Heart left ventricle (tissue), 16 donors: ENCODE measurements at regions of chr1 and their contacts with region 1.

Region 1: GRCh38 chr1:218345673-218346390 is 696 bp downstream of the TGFB2 start:
- DNase-seq: peak; percentile 61 to 84 (median 70)
- ATAC-seq: peak; percentile 59 to 86 (median 78)
- H3K4me3 ChIP-seq: peak overlapping the region; percentile 56 to 87 (median 68)
- H3K27ac ChIP-seq: peak overlapping the region; percentile 42 to 91 (median 82)
- H3K4me1 ChIP-seq: peaks cover 0 to 43% (median 11%) of the 10 kb centered on the region in 12 donors
- H3K27me3 ChIP-seq: peaks cover 0 to 5% (median 0%) of the 10 kb centered on the region in 9 donors
- CTCF ChIP-seq: peak in 6 of 12 donors; percentile 1 to 23 (median 8)
- POLR2A ChIP-seq: no peak

Region 2: DNA sequence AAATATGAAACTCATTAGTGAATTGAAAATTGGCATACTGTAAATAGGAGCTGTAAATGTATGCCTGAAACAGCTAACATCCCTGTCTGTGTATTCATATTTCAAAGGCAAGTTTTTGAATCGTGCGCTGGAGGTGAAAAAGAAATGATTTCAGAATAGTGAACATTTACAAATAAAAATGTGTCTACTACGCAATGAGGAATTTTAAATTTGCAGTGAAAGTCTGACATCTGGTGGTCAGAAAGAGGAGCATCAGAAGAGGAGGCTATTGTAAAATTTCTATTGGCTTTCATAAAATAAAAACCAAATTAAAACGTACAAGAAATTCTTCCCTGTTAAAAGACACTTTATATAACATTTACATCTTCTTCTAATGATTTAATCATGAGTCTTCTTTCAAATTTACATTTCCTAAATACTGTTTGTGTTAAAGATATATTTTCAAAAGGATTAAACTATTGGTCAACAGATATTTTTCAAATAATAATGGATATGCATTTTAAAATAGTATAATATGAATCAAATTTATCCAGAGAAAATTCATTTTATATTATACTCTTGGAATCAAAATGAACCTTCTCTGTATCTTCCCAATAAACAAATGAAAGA is 174.4 kb before region 1 on chr1:
- intact Hi-C with region 1: no loop called
- DNase-seq: no peak
- ATAC-seq: no peak
- H3K4me3 ChIP-seq: peak overlapping the region in 5 of 12 donors; percentile 7 to 32 (median 18)
- H3K27ac ChIP-seq: no peak overlapping the region
- H3K4me1 ChIP-seq: peaks cover 0 to 6% (median 0%) of the 10 kb centered on the region in 12 donors
- H3K27me3 ChIP-seq: peaks cover 0 to 65% (median 23%) of the 10 kb centered on the region in 9 donors
- CTCF ChIP-seq: peak; percentile 55 to 86 (median 74)
- POLR2A ChIP-seq: no peak

Region 3: GRCh38 chr1:218476380-218476779 is 130.5 kb after region 1 on chr1:
- intact Hi-C with region 1: loop called in 1 of 10 experiments (anchors 5 kb)
- DNase-seq: no peak
- ATAC-seq: no peak
- H3K4me3 ChIP-seq: no peak overlapping the region
- H3K27ac ChIP-seq: peak overlapping the region in 6 of 12 donors; percentile 9 to 66 (median 52)
- H3K4me1 ChIP-seq: peaks cover 0 to 64% (median 28%) of the 10 kb centered on the region in 12 donors
- H3K27me3 ChIP-seq: no peaks in the 10 kb centered on the region
- CTCF ChIP-seq: no peak
- POLR2A ChIP-seq: no peak

Region 4: DNA sequence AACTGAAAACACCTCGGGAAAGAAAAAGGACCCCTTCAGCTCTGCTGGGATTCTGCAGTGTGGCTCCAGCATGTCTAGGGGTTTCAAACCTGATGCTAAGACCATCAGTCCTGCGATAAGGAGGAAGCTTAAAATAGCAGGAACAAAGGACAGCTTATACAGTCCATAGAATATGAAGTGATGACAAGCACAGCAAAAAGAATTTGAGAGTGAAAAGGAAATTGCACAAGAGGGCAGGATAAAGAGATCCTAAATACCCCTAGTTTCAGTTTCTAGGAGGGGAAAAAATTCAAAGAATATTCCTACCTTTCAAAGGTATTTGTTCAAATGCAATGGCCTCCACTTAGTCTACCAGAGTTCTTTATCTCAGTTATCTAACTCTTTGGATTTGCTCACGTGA is 170.7 kb after region 1 on chr1:
- intact Hi-C with region 1: loop called in 5 of 10 experiments (anchors 5 to 10 kb)
- DNase-seq: no peak
- ATAC-seq: no peak
- H3K4me3 ChIP-seq: no peak overlapping the region
- H3K27ac ChIP-seq: no peak overlapping the region
- H3K4me1 ChIP-seq: no peaks in the 10 kb centered on the region
- H3K27me3 ChIP-seq: no peaks in the 10 kb centered on the region
- CTCF ChIP-seq: no peak
- POLR2A ChIP-seq: no peak

Region 5: GRCh38 chr1:218546309-218546708 is 200.5 kb after region 1 on chr1:
- intact Hi-C with region 1: loop called in 1 of 10 experiments (anchors 5 kb)
- DNase-seq: no peak
- ATAC-seq: no peak
- H3K4me3 ChIP-seq: no peak overlapping the region
- H3K27ac ChIP-seq: no peak overlapping the region
- H3K4me1 ChIP-seq: no peaks in the 10 kb centered on the region
- H3K27me3 ChIP-seq: no peaks in the 10 kb centered on the region
- CTCF ChIP-seq: peak in 2 of 12 donors; percentile 7 to 8
- POLR2A ChIP-seq: no peak

Region 6: GRCh38 chr1:219173758-219174588 is 828.1 kb after region 1 on chr1 and contains the start of gene LYPLAL1:
- intact Hi-C with region 1: loop called in 4 of 10 experiments (anchors 10 kb)
- DNase-seq: peak; percentile 90 to 96 (median 92)
- ATAC-seq: peak; percentile 93 to 96 (median 94)
- H3K4me3 ChIP-seq: peak within 1 kb of the TSS; percentile 66 to 92 (median 78)
- H3K27ac ChIP-seq: peak within 1 kb of the TSS; percentile 83 to 97 (median 94)
- H3K4me1 ChIP-seq: peaks cover 0 to 52% (median 31%) of the 10 kb centered on the region in 12 donors
- H3K27me3 ChIP-seq: no peaks in the 10 kb centered on the region
- CTCF ChIP-seq: peak in 3 of 12 donors; percentile 10 to 34 (median 31)
- POLR2A ChIP-seq: peak in 1 of 2 donors; percentile 89
- total RNA-seq, gene LYPLAL1: 31.8 to 126 (median 90.5) TPM

Region 7: DNA sequence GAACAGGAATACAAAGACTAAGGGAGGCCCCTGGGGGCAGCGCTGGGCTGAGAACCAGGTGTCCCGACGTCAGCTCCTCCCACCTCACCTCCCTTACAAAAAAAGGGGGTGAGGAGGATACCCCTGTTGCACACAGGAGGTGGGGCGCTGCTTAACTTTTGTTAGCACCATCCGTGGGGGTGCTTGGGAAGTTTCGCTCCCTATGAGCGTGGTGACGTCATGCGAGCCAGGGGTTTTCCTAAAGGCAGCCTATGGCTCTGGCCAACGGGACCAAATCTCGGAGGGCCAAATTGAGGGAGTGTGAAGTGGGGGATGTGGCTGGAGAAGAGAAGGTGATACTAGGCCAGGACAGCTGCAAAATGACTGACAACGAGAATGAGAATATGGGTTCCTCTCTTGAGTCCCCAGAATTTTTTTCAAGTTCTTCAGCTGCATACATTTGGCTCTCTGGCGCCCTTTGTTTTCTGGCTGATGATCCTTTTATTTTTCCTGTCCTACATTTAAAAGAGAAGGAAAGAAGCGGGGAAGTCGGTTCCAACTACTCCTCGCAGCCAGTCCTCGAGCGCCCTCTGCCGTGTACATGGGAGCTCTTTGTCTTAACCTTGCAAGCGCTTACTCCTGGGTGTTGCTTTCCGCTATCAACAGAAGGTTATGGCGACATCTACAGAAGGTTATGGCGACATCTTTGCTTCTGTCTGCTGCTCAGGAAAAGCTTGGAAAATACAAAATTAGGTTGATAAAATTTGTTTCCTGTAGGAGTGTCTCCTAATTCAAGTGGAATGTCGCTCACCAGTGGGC is 1315.0 kb after region 1 on chr1:
- intact Hi-C with region 1: loop called in 1 of 10 experiments (anchors 10 kb)
- DNase-seq: peak; percentile 87 to 95 (median 89)
- ATAC-seq: peak; percentile 70 to 91 (median 88)
- H3K4me3 ChIP-seq: peak overlapping the region in 8 of 12 donors; percentile 13 to 35 (median 28)
- H3K27ac ChIP-seq: peak overlapping the region in 3 of 12 donors; percentile 3 to 8 (median 6)
- H3K4me1 ChIP-seq: peaks cover 0 to 31% (median 13%) of the 10 kb centered on the region in 12 donors
- H3K27me3 ChIP-seq: peaks cover 0 to 2% (median 0%) of the 10 kb centered on the region in 9 donors
- CTCF ChIP-seq: peak; percentile 68 to 90 (median 79)
- POLR2A ChIP-seq: no peak